ENCODE measurements at regions of chr6 and their contacts with region 1.

Region 1: GRCh38 chr6:10954590-10955010 is 67.7 kb downstream of the SYCP2L start:
- DNase-seq: peak; percentile 90
- H3K4me3 Mint-ChIP-seq: no peak overlapping the region
- H3K27ac Mint-ChIP-seq: no peak overlapping the region
- H3K4me1 Mint-ChIP-seq: no peaks in the 10 kb centered on the region
- H3K27me3 Mint-ChIP-seq: peaks cover 11% of the 10 kb centered on the region

Region 2: GRCh38 chr6:11445146-11445545 is 490.5 kb after region 1 on chr6:
- intact Hi-C with region 1: no loop called
- DNase-seq: no peak
- H3K4me3 Mint-ChIP-seq: no peak overlapping the region
- H3K27ac Mint-ChIP-seq: no peak overlapping the region
- H3K4me1 Mint-ChIP-seq: peaks cover 26% of the 10 kb centered on the region
- H3K27me3 Mint-ChIP-seq: no peaks in the 10 kb centered on the region

Region 3: GRCh38 chr6:11575408-11576033 is 620.9 kb after region 1 on chr6:
- intact Hi-C with region 1: loop called (anchors 1 kb)
- DNase-seq: peak; percentile 85
- H3K4me3 Mint-ChIP-seq: no peak overlapping the region
- H3K27ac Mint-ChIP-seq: no peak overlapping the region
- H3K4me1 Mint-ChIP-seq: no peaks in the 10 kb centered on the region
- H3K27me3 Mint-ChIP-seq: no peaks in the 10 kb centered on the region

Measured in activated CD4-positive, alpha-beta T cell treated with anti-CD3 and anti-CD28 coated beads, Interleukin-2, amount 10 ng/mL, durations not matched to agents 24 days and 14 days (primary cell).